ENCODE measurements at regions of chr5 and their contacts with region 1.

Region 1: DNA sequence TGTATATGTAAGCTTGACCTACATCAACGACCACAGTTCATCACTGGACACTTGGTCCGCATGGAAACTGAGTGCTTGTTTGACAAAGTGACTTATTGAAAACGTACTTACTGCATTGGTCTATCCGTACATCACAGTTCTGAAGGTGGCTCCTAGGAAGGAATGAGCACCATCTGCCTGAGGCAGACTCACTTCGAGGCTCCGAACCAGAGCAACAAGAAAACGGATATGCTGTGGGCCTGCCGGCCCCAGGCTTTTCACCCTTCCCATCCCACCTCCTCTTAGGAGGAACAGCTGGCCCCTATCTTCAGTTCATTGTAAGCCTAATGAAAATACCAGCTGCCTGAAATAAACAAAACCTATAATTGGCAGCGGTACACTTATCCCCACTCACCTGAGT is 67.2 kb upstream of the TSLP start:
- DNase-seq: no peak
- H3K4me3 ChIP-seq: no peak overlapping the region
- CTCF ChIP-seq: no peak

Region 2: GRCh38 chr5:110916381-110917049 is 87.8 kb before region 1 on chr5:
- in situ Hi-C with region 1: loop called (anchors 5 kb)
- DNase-seq: peak; percentile 82
- H3K4me3 ChIP-seq: no peak overlapping the region
- CTCF ChIP-seq: no peak

Measured in astrocyte of the cerebellum (primary cell).